ENCODE measurements at regions of chr2 and their contacts with region 1.

Region 1: GRCh38 chr2:222707689-222708525 is 36.4 kb downstream of the MOGAT1 start:
- DNase-seq: peak in 1 of 2 experiments; percentile 87
- H3K4me3 ChIP-seq: no peak overlapping the region
- H3K27ac ChIP-seq: no peak overlapping the region
- H3K4me1 ChIP-seq: peaks cover 0 to 6% (median 0%) of the 10 kb centered on the region in 4 experiments; a peak in 3 of 7 replicates
- H3K27me3 ChIP-seq: no peaks in the 10 kb centered on the region
- CTCF ChIP-seq: peak; percentile 68 to 81 (median 73)
- EP300 ChIP-seq: no peak
- POLR2A ChIP-seq: no peak
- RAD21 ChIP-seq: peak; percentile 75 to 77

Region 2: GRCh38 chr2:222504719-222505118 is 203.2 kb before region 1 on chr2:
- CTCF ChIA-PET with region 1: no interaction called
- POLR2A ChIA-PET with region 1: no interaction called
- DNase-seq: no peak
- H3K4me3 ChIP-seq: no peak overlapping the region
- H3K27ac ChIP-seq: no peak overlapping the region
- H3K4me1 ChIP-seq: no peaks in the 10 kb centered on the region
- H3K27me3 ChIP-seq: no peaks in the 10 kb centered on the region
- CTCF ChIP-seq: no peak
- EP300 ChIP-seq: no peak
- POLR2A ChIP-seq: no peak
- RAD21 ChIP-seq: no peak

Region 3: GRCh38 chr2:222690564-222691200 is 17.2 kb before region 1 on chr2:
- CTCF ChIA-PET with region 1: interaction called, 124 read pairs
- POLR2A ChIA-PET with region 1: no interaction called
- DNase-seq: peak; percentile 59 to 92
- H3K4me3 ChIP-seq: no peak overlapping the region
- H3K27ac ChIP-seq: no peak overlapping the region
- H3K4me1 ChIP-seq: no peaks in the 10 kb centered on the region
- H3K27me3 ChIP-seq: no peaks in the 10 kb centered on the region
- CTCF ChIP-seq: peak; percentile 99 to 100 (median 100)
- EP300 ChIP-seq: no peak
- POLR2A ChIP-seq: no peak
- RAD21 ChIP-seq: peak; percentile 88 to 91

Region 4: GRCh38 chr2:222730366-222730999 is 22.6 kb after region 1 on chr2:
- CTCF ChIA-PET with region 1: interaction called, 15 read pairs
- POLR2A ChIA-PET with region 1: no interaction called
- DNase-seq: no peak
- H3K4me3 ChIP-seq: no peak overlapping the region
- H3K27ac ChIP-seq: no peak overlapping the region
- H3K4me1 ChIP-seq: no peaks in the 10 kb centered on the region
- H3K27me3 ChIP-seq: no peaks in the 10 kb centered on the region
- CTCF ChIP-seq: no peak
- EP300 ChIP-seq: no peak
- POLR2A ChIP-seq: no peak
- RAD21 ChIP-seq: no peak

Region 5: GRCh38 chr2:222797261-222797660 is 89.4 kb after region 1 on chr2:
- CTCF ChIA-PET with region 1: interaction called, 13 read pairs
- POLR2A ChIA-PET with region 1: no interaction called
- DNase-seq: no peak
- H3K4me3 ChIP-seq: no peak overlapping the region
- H3K27ac ChIP-seq: no peak overlapping the region
- H3K4me1 ChIP-seq: peaks cover 0 to 13% (median 1%) of the 10 kb centered on the region in 4 experiments; a peak in 3 of 7 replicates
- H3K27me3 ChIP-seq: no peaks in the 10 kb centered on the region
- CTCF ChIP-seq: peak in 2 of 3 experiments; percentile 22 to 53; a peak in 2 of 4 replicates
- EP300 ChIP-seq: no peak
- POLR2A ChIP-seq: no peak
- RAD21 ChIP-seq: peak; percentile 40 to 41

Region 6: DNA sequence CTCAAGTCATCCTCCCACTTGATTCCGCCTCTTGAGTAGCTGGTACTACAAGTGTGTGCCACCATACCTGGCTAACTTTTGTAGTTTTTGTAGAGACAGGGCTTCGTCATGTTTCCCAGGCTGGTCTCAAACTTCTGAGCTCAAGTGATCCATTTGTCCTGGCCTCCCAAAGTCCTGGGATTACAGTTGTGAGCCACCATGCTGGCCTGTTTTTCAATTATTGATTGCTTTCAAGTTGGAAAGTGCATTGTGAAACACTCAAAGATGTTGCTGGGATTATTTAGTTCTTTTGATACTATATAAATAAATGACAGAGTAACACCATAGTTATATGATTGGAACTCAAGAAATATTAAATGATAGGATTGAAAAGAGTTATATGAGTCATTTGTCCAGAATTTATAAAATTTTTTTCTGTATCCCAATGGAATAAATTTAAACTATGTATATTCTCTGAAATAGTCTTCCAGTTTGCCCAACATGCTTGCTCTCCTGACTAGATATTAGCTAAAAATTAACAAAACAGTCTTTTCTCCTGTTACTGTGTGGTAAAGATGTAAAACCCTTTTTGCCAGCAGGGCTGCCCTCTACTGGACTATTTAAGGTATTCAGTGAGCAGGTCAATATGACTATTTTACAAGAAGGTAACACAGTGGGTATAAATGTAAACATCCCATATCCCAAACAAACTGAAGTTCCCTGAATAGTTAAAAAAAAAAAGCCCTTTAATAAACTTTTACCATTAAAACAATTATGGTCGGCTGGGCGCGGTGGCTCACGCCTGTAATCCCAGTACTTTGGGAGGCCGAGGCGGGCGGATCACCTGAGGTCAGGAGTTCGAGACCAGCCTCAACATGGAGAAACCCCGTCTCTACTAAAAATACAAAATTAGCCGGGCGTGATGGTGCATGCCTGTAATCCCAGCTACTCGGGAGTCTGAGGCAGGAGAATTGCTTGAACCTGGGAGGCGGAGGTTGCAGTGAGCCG is 195.6 kb after region 1 on chr2:
- CTCF ChIA-PET with region 1: interaction called, 79 read pairs
- POLR2A ChIA-PET with region 1: interaction called, 3 read pairs
- DNase-seq: no peak
- H3K4me3 ChIP-seq: no peak overlapping the region
- H3K27ac ChIP-seq: no peak overlapping the region
- H3K4me1 ChIP-seq: peaks cover 2 to 22% (median 15%) of the 10 kb centered on the region in 4 experiments; a peak in 6 of 7 replicates
- H3K27me3 ChIP-seq: no peaks in the 10 kb centered on the region
- CTCF ChIP-seq: peak in 2 of 3 experiments; percentile 56 to 58; a peak in 2 of 4 replicates
- EP300 ChIP-seq: no peak
- POLR2A ChIP-seq: no peak
- RAD21 ChIP-seq: peak; percentile 74 to 81

Region 7: GRCh38 chr2:222959336-222959735 is 251.4 kb after region 1 on chr2:
- CTCF ChIA-PET with region 1: interaction called, 10 read pairs
- POLR2A ChIA-PET with region 1: no interaction called
- DNase-seq: peak in 1 of 2 experiments; percentile 71
- H3K4me3 ChIP-seq: no peak overlapping the region
- H3K27ac ChIP-seq: no peak overlapping the region
- H3K4me1 ChIP-seq: no peaks in the 10 kb centered on the region; a peak in 1 of 7 replicates
- H3K27me3 ChIP-seq: no peaks in the 10 kb centered on the region
- CTCF ChIP-seq: peak; percentile 5 to 42 (median 38)
- EP300 ChIP-seq: no peak
- POLR2A ChIP-seq: no peak
- RAD21 ChIP-seq: peak; percentile 42 to 53

Measured in H1 (cell line).